ENCODE measurements at regions of chr5 and their contacts with region 1.

Region 1: GRCh38 chr5:8993031-8993430 is 552.8 kb downstream of the SEMA5A start:
- DNase-seq: peak; percentile 33
- H3K4me3 Mint-ChIP-seq: no peak overlapping the region
- H3K27ac Mint-ChIP-seq: no peak overlapping the region
- H3K4me1 Mint-ChIP-seq: peaks cover 6% of the 10 kb centered on the region
- H3K27me3 Mint-ChIP-seq: no peaks in the 10 kb centered on the region
- CTCF ChIP-seq: peak; percentile 37

Region 2: GRCh38 chr5:7770436-7770835 is 1222.6 kb before region 1 on chr5:
- CTCF ChIA-PET with region 1: no interaction called
- POLR2A ChIA-PET with region 1: no interaction called
- intact Hi-C with region 1: no loop called
- DNase-seq: no peak
- H3K4me3 Mint-ChIP-seq: no peak overlapping the region
- H3K27ac Mint-ChIP-seq: no peak overlapping the region
- H3K4me1 Mint-ChIP-seq: no peaks in the 10 kb centered on the region
- H3K27me3 Mint-ChIP-seq: peaks cover 66% of the 10 kb centered on the region
- CTCF ChIP-seq: no peak

Region 3: DNA sequence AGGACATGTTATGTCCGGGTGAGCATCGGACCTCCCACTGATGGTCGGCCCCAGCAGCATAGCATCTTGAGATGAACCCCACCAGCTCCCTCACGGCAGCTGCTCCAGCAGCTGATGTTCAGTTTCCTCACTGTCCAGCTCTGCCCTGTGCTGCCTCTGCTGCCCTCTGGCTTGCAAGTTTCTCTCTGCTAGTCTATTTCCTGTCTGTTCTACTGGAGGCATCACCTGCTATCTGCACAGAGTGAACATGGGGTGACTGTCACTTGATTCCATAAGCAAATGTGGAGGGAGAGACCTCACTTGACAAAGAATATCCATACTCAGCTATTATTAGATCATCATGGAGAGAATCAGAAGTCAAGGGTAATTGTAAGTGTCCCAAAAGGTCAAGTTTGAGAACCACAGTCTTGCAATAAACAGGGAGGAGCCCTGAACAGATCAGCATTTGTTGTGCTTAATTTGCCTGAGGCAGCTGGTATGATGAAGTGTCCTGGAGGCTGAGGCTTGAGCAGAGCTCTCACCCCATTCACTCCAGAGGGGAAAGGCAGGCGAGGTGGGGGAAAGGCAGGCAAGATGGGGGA is 150.0 kb before region 1 on chr5:
- CTCF ChIA-PET with region 1: interaction called, 11 read pairs
- POLR2A ChIA-PET with region 1: no interaction called
- intact Hi-C with region 1: no loop called
- DNase-seq: peak; percentile 47
- H3K4me3 Mint-ChIP-seq: no peak overlapping the region
- H3K27ac Mint-ChIP-seq: no peak overlapping the region
- H3K4me1 Mint-ChIP-seq: peaks cover 13% of the 10 kb centered on the region
- H3K27me3 Mint-ChIP-seq: no peaks in the 10 kb centered on the region
- CTCF ChIP-seq: peak; percentile 27

Region 4: DNA sequence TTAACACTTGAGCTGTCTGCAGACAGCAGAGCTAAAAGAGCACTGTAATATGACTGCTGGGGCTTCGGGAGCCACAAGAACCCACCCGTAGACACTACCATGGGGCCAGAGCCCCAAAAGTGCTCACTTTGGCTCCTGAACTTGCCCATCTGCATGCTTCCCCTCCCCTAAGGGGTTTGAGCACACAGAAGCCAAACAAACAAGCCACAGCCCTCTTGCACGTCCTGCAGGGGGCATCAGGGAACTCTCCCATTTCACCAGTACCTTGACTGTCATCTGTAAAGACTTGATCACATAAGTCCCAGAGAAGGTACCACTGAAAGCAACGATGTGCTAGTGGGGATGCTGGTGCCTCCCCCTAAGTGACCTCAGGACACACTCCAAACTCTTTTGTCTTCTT is 129.0 kb before region 1 on chr5:
- CTCF ChIA-PET with region 1: interaction called, 3 read pairs
- POLR2A ChIA-PET with region 1: no interaction called
- intact Hi-C with region 1: loop called (anchors 5 kb)
- DNase-seq: peak; percentile 58
- H3K4me3 Mint-ChIP-seq: no peak overlapping the region
- H3K27ac Mint-ChIP-seq: no peak overlapping the region
- H3K4me1 Mint-ChIP-seq: peaks cover 5% of the 10 kb centered on the region
- H3K27me3 Mint-ChIP-seq: no peaks in the 10 kb centered on the region
- CTCF ChIP-seq: peak; percentile 69

Region 5: DNA sequence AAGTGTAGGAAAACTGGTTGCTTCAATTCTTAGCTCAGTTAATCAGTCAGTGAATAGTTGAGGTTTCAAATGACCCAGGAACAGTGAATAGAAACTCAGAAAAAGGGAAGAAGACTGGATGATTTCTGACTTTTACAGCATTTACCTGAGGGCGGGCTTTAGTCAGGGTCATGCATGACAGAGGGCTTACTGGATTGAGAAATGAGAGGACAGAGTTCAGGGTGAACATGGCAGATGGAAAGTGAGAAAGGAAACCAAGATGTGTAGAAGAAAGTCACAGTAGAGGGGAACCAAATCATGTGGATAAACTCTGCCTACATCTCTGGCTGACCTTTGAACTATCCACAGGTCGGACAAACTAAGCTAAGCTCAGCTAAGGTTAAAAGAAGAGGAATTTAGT is 43.1 kb before region 1 on chr5:
- CTCF ChIA-PET with region 1: no interaction called
- POLR2A ChIA-PET with region 1: no interaction called
- intact Hi-C with region 1: no loop called
- DNase-seq: no peak
- H3K4me3 Mint-ChIP-seq: no peak overlapping the region
- H3K27ac Mint-ChIP-seq: no peak overlapping the region
- H3K4me1 Mint-ChIP-seq: no peaks in the 10 kb centered on the region
- H3K27me3 Mint-ChIP-seq: no peaks in the 10 kb centered on the region
- CTCF ChIP-seq: no peak

Region 6: GRCh38 chr5:9034649-9035048 is 41.6 kb after region 1 on chr5:
- CTCF ChIA-PET with region 1: no interaction called
- POLR2A ChIA-PET with region 1: no interaction called
- intact Hi-C with region 1: no loop called
- DNase-seq: no peak
- H3K4me3 Mint-ChIP-seq: no peak overlapping the region
- H3K27ac Mint-ChIP-seq: no peak overlapping the region
- H3K4me1 Mint-ChIP-seq: no peaks in the 10 kb centered on the region
- H3K27me3 Mint-ChIP-seq: no peaks in the 10 kb centered on the region
- CTCF ChIP-seq: no peak

Region 7: GRCh38 chr5:9456435-9457042 is 463.5 kb after region 1 on chr5:
- CTCF ChIA-PET with region 1: no interaction called
- POLR2A ChIA-PET with region 1: no interaction called
- intact Hi-C with region 1: no loop called
- DNase-seq: no peak
- H3K4me3 Mint-ChIP-seq: no peak overlapping the region
- H3K27ac Mint-ChIP-seq: no peak overlapping the region
- H3K4me1 Mint-ChIP-seq: peaks cover 7% of the 10 kb centered on the region
- H3K27me3 Mint-ChIP-seq: no peaks in the 10 kb centered on the region
- CTCF ChIP-seq: no peak